ENCODE measurements at regions of chr2 and their contacts with region 1.

Region 1: DNA sequence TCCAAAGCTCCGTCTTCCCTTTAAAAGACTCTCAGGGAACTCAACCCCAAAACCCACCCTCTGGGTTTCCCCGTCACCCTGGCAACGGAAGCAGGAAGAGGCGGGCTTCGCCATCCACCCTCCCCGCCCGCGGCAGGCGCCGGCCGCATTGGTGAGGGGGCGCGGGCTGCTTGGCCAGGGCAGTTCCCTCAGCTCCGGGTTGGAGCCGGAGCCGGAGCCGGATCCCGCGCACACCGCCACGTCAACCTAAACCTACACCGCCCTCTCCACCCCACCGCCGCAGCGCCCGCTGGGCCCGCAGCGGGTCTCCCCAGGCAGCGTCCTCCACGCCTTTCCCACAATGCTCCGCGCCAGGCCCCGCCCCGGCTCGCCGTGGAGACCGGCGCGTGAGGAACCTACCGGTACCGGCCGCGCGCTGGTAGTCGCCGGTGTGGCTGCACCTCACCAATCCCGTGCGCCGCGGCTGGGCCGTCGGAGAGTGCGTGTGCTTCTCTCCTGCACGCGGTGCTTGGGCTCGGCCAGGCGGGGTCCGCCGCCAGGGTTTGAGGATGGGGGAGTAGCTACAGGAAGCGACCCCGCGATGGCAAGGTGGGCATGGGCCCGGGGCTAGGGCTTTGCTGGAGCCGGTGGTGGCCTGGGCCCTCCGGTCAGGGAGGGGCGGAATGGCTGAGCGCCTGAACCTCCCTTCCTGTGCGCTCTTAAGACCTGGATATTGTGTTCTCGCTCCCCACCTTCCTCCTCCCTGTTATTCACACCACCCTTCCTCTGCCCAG is at the start of gene DNAJC10:
- DNase-seq: peak; percentile 89 to 95 (median 94)
- H3K4me3 ChIP-seq: peak within 1 kb of the TSS; percentile 83 to 96 (median 89)
- H3K27ac ChIP-seq: peak within 1 kb of the TSS; percentile 68 to 91
- H3K4me1 ChIP-seq: peaks cover 21 to 46% (median 37%) of the 10 kb centered on the region in 4 experiments
- H3K27me3 ChIP-seq: no peaks in the 10 kb centered on the region

Region 2: GRCh38 chr2:182666674-182667314 is 49.3 kb before region 1 on chr2:
- CTCF ChIA-PET with region 1: interaction called, 13 read pairs
- POLR2A ChIA-PET with region 1: no interaction called
- DNase-seq: peak; percentile 42 to 71 (median 64)
- H3K4me3 ChIP-seq: no peak overlapping the region
- H3K27ac ChIP-seq: no peak overlapping the region
- H3K4me1 ChIP-seq: no peaks in the 10 kb centered on the region
- H3K27me3 ChIP-seq: no peaks in the 10 kb centered on the region

Region 3: DNA sequence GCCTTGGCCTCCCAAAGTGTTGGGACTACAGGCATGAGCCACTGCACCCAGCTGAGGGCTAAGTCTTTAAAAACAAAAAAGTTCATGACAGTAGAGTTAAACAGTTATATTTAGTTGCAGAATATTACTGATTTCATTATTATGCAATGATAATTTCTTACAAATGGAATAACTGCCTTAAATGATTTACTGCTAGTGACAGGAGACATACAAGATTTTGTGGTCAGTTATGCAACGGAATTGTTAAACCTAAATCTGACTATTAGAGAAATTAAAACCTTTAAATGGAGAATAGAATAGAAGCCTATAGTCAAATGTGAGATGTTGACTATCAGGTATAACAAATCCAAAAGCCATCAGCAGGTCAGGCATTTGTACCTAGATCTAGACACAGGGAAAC is 10.3 kb before region 1 on chr2:
- CTCF ChIA-PET with region 1: no interaction called
- POLR2A ChIA-PET with region 1: no interaction called
- DNase-seq: peak in 2 of 3 donors; percentile 51 to 55
- H3K4me3 ChIP-seq: no peak overlapping the region
- H3K27ac ChIP-seq: no peak overlapping the region
- H3K4me1 ChIP-seq: peaks cover 0 to 15% (median 11%) of the 10 kb centered on the region in 4 experiments
- H3K27me3 ChIP-seq: no peaks in the 10 kb centered on the region

Region 4: DNA sequence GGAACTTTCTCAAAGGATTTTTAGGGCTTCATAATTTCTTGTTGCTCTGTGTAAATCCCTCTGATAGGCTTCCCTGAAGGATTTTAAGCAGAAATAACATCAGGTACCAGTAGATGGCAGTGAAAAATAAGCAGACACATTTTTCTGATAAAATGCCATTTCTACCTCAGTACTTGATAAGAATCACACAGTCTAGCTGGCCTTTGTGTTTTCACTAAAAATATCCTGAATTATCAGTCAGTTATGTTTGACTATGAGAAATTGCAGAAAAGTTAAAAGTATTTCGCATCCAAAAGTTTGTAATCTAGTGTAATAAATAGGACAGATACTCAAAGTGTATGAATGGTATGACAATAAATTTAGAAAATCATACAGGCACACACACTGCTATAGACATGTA is 68.7 kb after region 1 on chr2:
- CTCF ChIA-PET with region 1: no interaction called
- POLR2A ChIA-PET with region 1: no interaction called
- DNase-seq: peak; percentile 17 to 31 (median 24)
- H3K4me3 ChIP-seq: no peak overlapping the region
- H3K27ac ChIP-seq: no peak overlapping the region
- H3K4me1 ChIP-seq: no peaks in the 10 kb centered on the region
- H3K27me3 ChIP-seq: no peaks in the 10 kb centered on the region

Region 5: GRCh38 chr2:182818541-182819324 is 102.7 kb after region 1 on chr2:
- CTCF ChIA-PET with region 1: no interaction called
- POLR2A ChIA-PET with region 1: no interaction called
- DNase-seq: no peak
- H3K4me3 ChIP-seq: no peak overlapping the region
- H3K27ac ChIP-seq: no peak overlapping the region
- H3K4me1 ChIP-seq: no peaks in the 10 kb centered on the region
- H3K27me3 ChIP-seq: peaks cover 0 to 3% (median 0%) of the 10 kb centered on the region in 5 experiments